Natural killer cell (primary cell): ENCODE measurements at regions of chr5 and their contacts with region 1.

Region 1: DNA sequence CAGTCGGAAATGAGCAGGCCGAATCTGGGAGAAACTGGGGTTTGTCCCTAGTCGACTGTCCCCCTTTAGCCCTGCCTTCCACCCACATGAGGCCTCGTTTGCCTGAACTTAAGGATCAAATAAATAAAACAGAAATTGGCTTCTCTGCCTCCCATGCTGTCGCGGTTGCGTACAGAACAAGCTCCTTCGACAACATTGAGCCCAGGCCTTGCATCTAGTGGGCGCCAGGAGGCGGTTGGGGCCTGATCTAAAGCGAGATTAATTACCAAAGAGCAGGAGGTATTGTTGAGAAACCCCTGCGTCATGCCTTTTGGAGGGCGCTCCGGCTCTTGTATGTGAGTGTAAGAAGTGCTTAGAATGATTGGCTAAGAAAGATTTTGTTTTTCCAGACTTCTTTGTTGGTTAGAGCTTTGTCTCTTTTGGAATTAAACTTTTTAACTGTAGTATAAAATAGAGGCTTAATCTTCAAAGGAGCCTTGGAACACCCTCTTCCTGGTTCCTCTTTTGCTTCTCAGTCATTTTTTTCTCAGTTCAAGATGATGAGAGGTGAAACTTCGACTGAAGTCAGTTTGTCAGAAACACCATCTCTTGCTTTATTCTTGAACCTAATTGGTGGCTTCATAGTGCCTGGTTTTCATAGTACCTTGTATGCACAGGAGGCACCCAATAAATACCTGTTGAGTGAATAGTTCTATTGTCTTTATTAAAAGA is 827 bp downstream of the ATP6V0E1 start:
- DNase-seq: peak; percentile 64 to 88
- ATAC-seq: peak; percentile 68 to 84 (median 73)
- H3K4me3 ChIP-seq: peak overlapping the region; percentile 100
- H3K4me3 Mint-ChIP-seq: peak overlapping the region; percentile 98
- H3K27ac ChIP-seq: peak overlapping the region; percentile 96
- H3K27ac Mint-ChIP-seq: peak overlapping the region; percentile 94 to 98
- H3K4me1 ChIP-seq: peaks cover 22% of the 10 kb centered on the region
- H3K4me1 Mint-ChIP-seq: peaks cover 29 to 31% of the 10 kb centered on the region in 2 donors
- H3K27me3 ChIP-seq: no peaks in the 10 kb centered on the region
- H3K27me3 Mint-ChIP-seq: no peaks in the 10 kb centered on the region
- CTCF ChIP-seq: peak; percentile 29

Region 2: DNA sequence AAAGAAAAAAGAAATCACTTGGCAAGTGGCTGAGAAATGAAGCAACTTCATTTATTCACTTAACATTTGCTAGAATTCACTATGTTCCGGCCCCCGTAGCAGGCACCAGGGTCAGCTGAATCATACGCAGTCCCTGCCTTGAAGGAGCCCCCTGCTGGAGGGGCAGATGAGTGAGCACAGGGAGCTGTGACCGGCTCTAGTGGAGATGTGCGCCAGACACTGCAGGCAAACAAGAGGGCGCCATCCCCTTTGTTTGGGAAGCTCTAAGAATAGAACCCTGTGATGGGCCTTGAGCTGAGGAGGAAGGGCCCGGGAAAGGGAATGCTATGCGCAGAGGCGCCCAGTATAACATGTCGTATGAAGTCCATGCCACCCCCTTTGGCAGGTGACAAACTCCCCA is 45.3 kb before region 1 on chr5:
- intact Hi-C with region 1: no loop called
- DNase-seq: peak in 1 of 2 donors; percentile 23
- ATAC-seq: peak in 1 of 3 donors; percentile 21
- H3K4me3 ChIP-seq: no peak overlapping the region
- H3K4me3 Mint-ChIP-seq: no peak overlapping the region
- H3K27ac ChIP-seq: no peak overlapping the region
- H3K27ac Mint-ChIP-seq: no peak overlapping the region
- H3K4me1 ChIP-seq: no peaks in the 10 kb centered on the region
- H3K4me1 Mint-ChIP-seq: peaks cover 0 to 4% of the 10 kb centered on the region in 2 donors
- H3K27me3 ChIP-seq: no peaks in the 10 kb centered on the region
- H3K27me3 Mint-ChIP-seq: no peaks in the 10 kb centered on the region
- CTCF ChIP-seq: no peak

Region 3: DNA sequence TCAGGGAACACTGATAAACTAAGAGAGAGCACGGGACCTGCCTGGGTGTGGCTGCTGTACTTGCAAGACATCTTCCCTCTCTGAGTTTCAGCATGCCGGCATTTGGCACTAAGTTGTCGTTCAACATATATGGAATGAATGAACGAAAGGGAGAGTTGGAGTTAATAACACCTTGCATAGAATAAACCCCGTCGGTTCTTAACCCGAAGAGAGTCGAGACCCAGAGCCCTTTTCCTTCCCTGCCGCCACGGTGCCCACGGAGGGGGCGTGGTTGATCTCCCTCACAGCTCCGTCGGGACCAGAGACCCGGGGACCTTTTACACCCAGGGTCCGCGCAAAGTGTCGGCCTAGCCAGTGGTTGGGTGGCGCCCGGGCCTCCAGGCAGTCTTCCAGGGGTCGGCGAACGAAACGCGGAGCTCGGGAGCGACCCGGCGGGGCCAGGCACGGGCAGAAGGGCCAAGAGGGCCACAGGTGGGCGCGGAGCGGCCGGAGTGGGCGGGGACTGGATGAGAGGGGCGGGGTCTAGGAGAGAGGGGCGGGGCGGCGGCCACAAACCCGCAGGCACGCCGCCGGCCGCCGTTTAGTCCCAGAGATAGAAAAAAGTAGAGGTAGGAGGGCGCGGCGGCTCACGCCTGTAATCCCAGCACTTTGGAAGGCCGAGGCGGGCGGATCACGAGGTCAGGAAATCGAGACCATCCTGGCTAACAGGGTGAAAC is 25.9 kb before region 1 on chr5:
- intact Hi-C with region 1: loop called (anchors 1 kb)
- DNase-seq: peak; percentile 57 to 78
- ATAC-seq: peak; percentile 67 to 83 (median 78)
- H3K4me3 ChIP-seq: peak overlapping the region; percentile 64
- H3K4me3 Mint-ChIP-seq: peak overlapping the region; percentile 96
- H3K27ac ChIP-seq: peak overlapping the region; percentile 75
- H3K27ac Mint-ChIP-seq: peak overlapping the region; percentile 94 to 97
- H3K4me1 ChIP-seq: peaks cover 17% of the 10 kb centered on the region
- H3K4me1 Mint-ChIP-seq: peaks cover 31 to 34% of the 10 kb centered on the region in 2 donors
- H3K27me3 ChIP-seq: no peaks in the 10 kb centered on the region
- H3K27me3 Mint-ChIP-seq: no peaks in the 10 kb centered on the region
- CTCF ChIP-seq: no peak

Region 4: DNA sequence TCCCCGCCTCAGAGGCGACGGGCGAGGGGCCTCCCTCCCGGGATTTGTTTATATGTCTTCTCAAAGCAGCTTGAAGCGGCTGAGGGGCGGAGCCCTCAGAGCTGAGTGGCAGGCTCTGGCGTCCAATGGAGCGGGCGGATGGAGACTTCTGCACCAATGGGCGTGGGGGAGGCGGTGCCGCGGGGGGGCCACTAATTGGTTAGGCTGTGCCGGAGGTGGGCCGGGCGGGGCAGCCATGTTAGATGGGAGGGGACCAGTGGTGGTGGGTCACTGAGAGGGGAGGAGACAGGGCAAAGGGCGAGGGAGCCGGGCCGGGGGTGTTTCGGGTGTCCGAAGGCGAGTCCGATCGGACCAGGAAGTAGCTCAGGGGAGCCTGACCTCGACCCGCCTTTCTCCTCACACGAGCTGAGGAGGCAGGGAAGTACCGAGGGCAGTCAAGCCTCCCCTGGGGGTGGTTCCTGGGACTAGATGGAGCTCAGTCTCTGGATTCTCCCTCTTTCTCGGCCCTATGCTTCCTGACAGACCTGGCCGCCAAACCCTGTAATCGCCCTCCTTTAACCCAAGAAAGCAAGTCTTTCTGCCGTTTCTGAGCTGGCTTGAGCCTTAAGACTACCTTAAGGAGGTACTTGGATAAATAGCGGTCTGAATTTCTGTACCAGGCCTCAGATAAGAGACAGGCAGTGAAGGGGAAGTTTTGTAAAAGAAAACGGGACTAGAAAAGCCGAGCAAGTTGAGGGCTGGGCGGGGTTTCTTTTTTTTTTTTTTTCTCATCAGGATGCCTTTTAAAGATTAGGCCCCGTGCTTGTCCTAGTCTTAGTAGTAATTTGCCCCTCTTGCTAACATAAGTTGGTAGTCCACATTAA is 72.9 kb after region 1 on chr5:
- intact Hi-C with region 1: loop called (anchors 1 kb)
- DNase-seq: peak; percentile 98 to 99
- ATAC-seq: peak; percentile 80 to 93 (median 83)
- H3K4me3 ChIP-seq: peak overlapping the region; percentile 86
- H3K4me3 Mint-ChIP-seq: peak overlapping the region; percentile 94
- H3K27ac ChIP-seq: peak overlapping the region; percentile 92
- H3K27ac Mint-ChIP-seq: peak overlapping the region; percentile 89 to 95
- H3K4me1 ChIP-seq: peaks cover 8% of the 10 kb centered on the region
- H3K4me1 Mint-ChIP-seq: peaks cover 36 to 37% of the 10 kb centered on the region in 2 donors
- H3K27me3 ChIP-seq: no peaks in the 10 kb centered on the region
- H3K27me3 Mint-ChIP-seq: peaks cover 4 to 10% of the 10 kb centered on the region in 2 donors
- CTCF ChIP-seq: no peak

Region 5: GRCh38 chr5:173144200-173145176 is 160.1 kb after region 1 on chr5 and contains the start of gene BNIP1:
- intact Hi-C with region 1: loop called (anchors 1 kb)
- DNase-seq: peak; percentile 98
- ATAC-seq: peak; percentile 86 to 98 (median 87)
- H3K4me3 ChIP-seq: peak within 1 kb of the TSS; percentile 92
- H3K4me3 Mint-ChIP-seq: peak within 1 kb of the TSS; percentile 94
- H3K27ac ChIP-seq: peak within 1 kb of the TSS; percentile 96
- H3K27ac Mint-ChIP-seq: peak within 1 kb of the TSS; percentile 97 to 100
- H3K4me1 ChIP-seq: peaks cover 9% of the 10 kb centered on the region
- H3K4me1 Mint-ChIP-seq: peaks cover 5 to 11% of the 10 kb centered on the region in 2 donors
- H3K27me3 ChIP-seq: no peaks in the 10 kb centered on the region
- H3K27me3 Mint-ChIP-seq: no peaks in the 10 kb centered on the region
- CTCF ChIP-seq: peak; percentile 87
- total RNA-seq, gene BNIP1: 29.4 to 34.8 (median 33.0) TPM

Region 6: DNA sequence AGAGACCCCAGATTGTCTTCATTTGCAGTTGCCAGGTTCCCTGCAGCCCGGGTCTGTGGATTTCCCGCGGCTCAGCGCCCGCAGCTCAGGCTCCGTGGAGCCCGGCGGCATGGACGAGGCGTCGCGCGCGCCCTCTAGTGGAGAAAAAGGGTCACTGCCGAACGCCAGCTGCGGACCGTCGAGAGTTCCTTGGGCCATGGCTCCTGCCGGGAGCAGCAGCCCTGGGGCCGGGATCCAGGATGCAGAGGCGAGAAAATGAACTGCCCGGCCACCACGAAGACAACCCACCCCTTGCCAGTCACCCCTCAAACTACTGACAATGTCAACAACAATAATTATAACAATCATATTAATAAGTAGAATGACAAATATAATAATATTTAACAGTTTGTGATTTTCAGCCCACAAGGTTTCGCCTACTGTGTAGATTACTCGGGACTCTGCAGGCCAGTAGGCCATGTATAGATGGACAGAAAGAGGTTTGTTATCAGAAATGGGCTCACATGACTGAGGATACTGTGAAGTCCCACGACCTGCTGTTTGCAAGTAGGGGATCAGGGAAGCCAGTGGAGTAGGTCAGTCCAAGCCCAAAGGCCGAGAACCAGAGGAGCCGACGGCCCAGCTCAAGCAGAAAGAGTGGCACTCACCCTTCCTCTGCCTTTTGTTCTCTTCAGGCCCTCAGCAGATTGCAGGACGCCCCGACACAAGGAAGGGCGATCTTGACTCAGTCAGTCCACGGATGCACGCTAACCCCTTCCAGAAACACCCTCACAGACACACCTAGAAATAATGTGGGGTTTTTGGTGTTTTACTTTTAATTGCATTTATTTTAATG is 588.9 kb after region 1 on chr5:
- intact Hi-C with region 1: loop called (anchors 2 kb)
- DNase-seq: peak; percentile 63 to 73
- ATAC-seq: peak; percentile 77 to 98 (median 80)
- H3K4me3 ChIP-seq: no peak overlapping the region
- H3K4me3 Mint-ChIP-seq: no peak overlapping the region
- H3K27ac ChIP-seq: no peak overlapping the region
- H3K27ac Mint-ChIP-seq: no peak overlapping the region
- H3K4me1 ChIP-seq: peaks cover 5% of the 10 kb centered on the region
- H3K4me1 Mint-ChIP-seq: peaks cover 6 to 12% of the 10 kb centered on the region in 2 donors
- H3K27me3 ChIP-seq: peaks cover 5% of the 10 kb centered on the region
- H3K27me3 Mint-ChIP-seq: peaks cover 17 to 33% of the 10 kb centered on the region in 2 donors
- CTCF ChIP-seq: peak; percentile 96